BJ (cell line): ENCODE measurements at regions of chr4 and their contacts with region 1.

Region 1: GRCh38 chr4:74085669-74086068 is 13.3 kb downstream of the CXCL2 start:
- DNase-seq: no peak
- H3K4me3 ChIP-seq: no peak overlapping the region
- H3K27me3 ChIP-seq: peaks cover 2% of the 10 kb centered on the region
- CTCF ChIP-seq: no peak

Region 2: GRCh38 chr4:74098450-74098994 is 12.9 kb after region 1 on chr4:
- CTCF ChIA-PET with region 1: interaction called, 21 read pairs
- POLR2A ChIA-PET with region 1: interaction called, 11 read pairs
- DNase-seq: no peak
- H3K4me3 ChIP-seq: peak overlapping the region; percentile 64
- H3K27me3 ChIP-seq: no peaks in the 10 kb centered on the region
- CTCF ChIP-seq: peak; percentile 31